ENCODE measurements at regions of chr9 and their contacts with region 1.

Region 1: DNA sequence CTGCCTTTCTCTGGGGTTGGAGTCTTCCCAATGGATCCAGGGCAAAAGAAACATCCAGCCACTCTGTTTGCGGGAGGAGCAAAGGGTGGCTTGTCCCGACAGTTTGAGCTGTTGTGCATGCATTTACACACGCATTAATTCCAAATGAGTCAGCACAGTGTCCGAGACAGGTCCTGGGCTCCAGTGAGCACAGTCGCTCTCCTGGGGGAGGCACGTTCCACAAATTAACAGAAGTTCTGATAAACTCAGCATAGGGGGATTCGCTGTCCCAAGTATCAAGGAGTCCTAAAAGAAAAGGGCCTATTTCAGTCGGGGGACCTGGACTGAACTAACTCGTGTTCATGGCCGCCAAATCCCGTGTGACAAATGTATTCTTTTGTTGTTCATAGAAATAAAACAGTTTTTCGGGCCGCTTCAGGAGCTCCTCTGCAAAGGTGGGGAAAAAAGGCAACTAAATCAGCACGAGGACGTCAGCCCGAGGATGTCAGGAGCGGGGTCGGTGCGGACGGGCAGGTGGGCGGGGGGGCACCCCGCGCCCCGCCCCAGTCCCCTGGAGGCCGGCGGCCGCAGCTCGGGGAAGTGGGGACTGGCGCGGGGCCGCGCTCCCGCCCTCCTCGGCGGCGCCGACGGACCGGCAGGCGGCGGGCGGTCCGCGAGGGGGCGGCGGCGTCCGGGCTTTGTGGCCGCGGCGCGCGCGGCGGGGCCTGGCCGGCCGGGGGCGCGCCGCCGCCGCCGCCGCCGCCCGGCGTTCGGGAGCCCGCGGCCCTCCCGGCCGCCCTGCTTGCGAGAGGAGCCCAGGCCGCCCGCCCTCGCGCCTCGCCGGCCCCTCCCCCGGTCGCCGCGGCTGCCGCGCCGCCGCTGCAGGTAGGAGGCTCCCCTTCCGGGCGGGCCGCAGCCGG is at the start of gene MSANTD3:
- DNase-seq: peak; percentile 76
- ATAC-seq: peak; percentile 86
- H3K4me3 ChIP-seq: peak within 1 kb of the TSS; percentile 77 to 97 (median 92)
- H3K27ac ChIP-seq: peak within 1 kb of the TSS; percentile 96
- H3K4me1 ChIP-seq: peaks cover 49% of the 10 kb centered on the region
- H3K27me3 ChIP-seq: 0 out of 5 replicates have a peak, but pooled peaks cover 0 to 1% of the 10 kb centered on the region in 2 experiments
- CTCF ChIP-seq: peak; percentile 9; the same call in 1 of the 2 replicates
- EP300 ChIP-seq: no peak
- POLR2A ChIP-seq: peak; percentile 50 to 79
- RAD21 ChIP-seq: no peak
- total RNA-seq, gene MSANTD3: 19.2 and 19.8 TPM in 2 replicates

Region 2: DNA sequence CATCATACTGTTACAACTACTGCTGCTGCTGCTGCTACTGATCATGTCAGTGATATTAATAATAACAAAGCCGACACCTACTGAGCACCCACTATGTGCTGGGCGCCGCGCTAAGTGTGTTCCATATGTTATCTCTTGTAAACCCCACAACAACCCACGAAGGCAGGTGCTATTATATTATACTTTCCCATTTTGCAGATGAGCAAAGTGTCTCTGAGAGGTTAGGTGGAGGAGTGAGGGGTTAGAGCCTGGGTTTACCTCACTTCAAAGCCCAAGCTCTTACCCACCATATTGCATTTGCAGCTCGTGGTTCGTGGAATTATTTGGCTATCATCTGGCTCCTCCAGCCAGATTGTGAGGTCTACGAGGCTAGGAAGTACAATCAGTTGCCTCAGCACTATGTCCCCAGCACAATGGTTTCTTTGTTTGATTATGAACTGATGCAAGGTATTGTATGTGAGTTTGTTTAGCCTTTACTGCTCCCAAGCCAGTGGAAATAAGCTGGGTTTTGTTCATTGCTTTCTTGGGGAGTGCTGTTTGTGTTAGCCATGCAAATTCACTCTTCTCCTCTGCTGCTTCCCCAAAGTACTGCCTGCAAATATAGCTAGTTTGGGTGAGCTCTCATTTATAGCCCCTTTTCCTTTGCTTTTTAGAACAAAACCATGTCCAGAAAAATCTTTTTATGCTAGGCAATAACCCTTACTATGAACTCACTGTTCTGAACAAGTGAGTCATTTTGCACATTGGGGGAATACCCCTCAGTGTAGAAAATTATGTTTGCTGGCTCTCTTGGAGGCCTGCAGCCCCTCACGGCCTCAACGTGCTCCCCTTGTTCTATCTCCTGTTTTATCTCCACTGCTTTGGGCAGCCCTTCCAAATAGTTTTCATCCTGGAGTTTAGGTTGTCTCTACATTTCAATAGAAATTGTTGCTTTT is 1252.9 kb before region 1 on chr9:
- CTCF ChIA-PET with region 1: no interaction called
- POLR2A ChIA-PET with region 1: no interaction called
- in situ Hi-C with region 1: no loop called
- intact Hi-C with region 1: loop called (anchors 5 kb)
- DNase-seq: peak; percentile 87
- ATAC-seq: peak; percentile 76
- H3K4me3 ChIP-seq: peak overlapping the region in 2 of 3 experiments; percentile 9 to 24; a peak in 2 of 6 replicates
- H3K27ac ChIP-seq: peak overlapping the region; percentile 22
- H3K4me1 ChIP-seq: peaks cover 85% of the 10 kb centered on the region
- H3K27me3 ChIP-seq: peaks cover 2 to 6% of the 10 kb centered on the region in 2 experiments; a peak in 2 of 5 replicates
- CTCF ChIP-seq: no peak
- EP300 ChIP-seq: 0 out of 4 replicates have a peak, but pooled peaks of 1 of the 2 experiments have one; percentile 31
- POLR2A ChIP-seq: no peak
- RAD21 ChIP-seq: no peak

Region 3: GRCh38 chr9:100352727-100353505 is 73.9 kb before region 1 on chr9 and contains the start of gene TEX10:
- CTCF ChIA-PET with region 1: no interaction called
- POLR2A ChIA-PET with region 1: interaction called, 9 read pairs
- in situ Hi-C with region 1: loop called (anchors 5 kb)
- intact Hi-C with region 1: loop called (anchors 5 kb)
- DNase-seq: peak; percentile 75
- ATAC-seq: peak; percentile 91
- H3K4me3 ChIP-seq: peak within 1 kb of the TSS; percentile 86 to 94 (median 88)
- H3K27ac ChIP-seq: peak within 1 kb of the TSS; percentile 85
- H3K4me1 ChIP-seq: peaks cover 57% of the 10 kb centered on the region
- H3K27me3 ChIP-seq: no peaks in the 10 kb centered on the region; a peak in 1 of 5 replicates
- CTCF ChIP-seq: 0 out of 2 replicates have a peak, but pooled peaks have one; percentile 25
- EP300 ChIP-seq: no peak
- POLR2A ChIP-seq: peak; percentile 80 to 94
- RAD21 ChIP-seq: no peak
- total RNA-seq, gene TEX10: 38.7 and 50.2 TPM in 2 replicates

Region 4: DNA sequence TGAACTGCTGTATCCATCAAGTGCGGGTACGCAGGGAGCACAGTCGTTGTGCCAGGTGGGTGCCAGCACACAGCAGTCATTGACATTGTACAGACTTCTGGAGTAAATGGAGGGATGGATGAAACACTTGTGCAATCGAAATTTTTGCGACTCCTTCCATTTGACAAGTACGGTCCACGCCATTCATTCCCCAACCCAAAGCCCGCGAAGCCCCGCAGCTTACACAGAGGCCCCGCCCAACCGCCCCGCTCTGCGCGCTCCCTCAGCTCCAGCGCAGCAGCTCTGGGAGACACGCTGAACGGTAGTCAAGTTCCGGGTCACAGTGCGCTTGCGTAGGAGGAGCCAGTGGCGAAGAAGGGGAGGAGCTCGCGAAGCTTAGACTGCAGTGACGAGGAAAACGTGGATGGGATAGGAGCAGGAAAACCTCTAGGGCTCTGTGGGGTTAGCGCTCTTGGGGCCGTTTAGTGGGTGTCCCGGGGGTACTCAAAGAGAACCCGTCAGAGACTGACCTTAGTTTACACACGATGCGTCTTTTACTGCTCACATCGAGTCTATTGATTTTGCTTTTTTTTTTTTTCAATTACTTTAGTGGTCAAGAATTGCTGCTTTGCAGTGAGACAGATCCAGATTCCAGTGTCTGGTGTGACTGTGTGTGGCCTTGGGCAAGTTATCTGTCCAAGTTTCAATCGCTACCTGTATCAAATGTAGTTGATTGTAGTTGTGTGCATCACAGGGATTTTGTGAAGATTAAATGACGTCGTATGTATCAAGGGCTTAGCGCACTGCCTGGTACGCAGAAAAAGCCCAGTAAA is 15.1 kb before region 1 on chr9:
- CTCF ChIA-PET with region 1: no interaction called
- POLR2A ChIA-PET with region 1: interaction called, 35 read pairs
- in situ Hi-C with region 1: no loop called
- intact Hi-C with region 1: no loop called
- DNase-seq: peak; percentile 89
- ATAC-seq: peak; percentile 99
- H3K4me3 ChIP-seq: peak overlapping the region; percentile 43 to 70 (median 48)
- H3K27ac ChIP-seq: peak overlapping the region; percentile 41
- H3K4me1 ChIP-seq: peaks cover 14% of the 10 kb centered on the region
- H3K27me3 ChIP-seq: no peaks in the 10 kb centered on the region; a peak in 1 of 5 replicates
- CTCF ChIP-seq: no peak
- EP300 ChIP-seq: no peak
- POLR2A ChIP-seq: peak; percentile 56 to 82
- RAD21 ChIP-seq: no peak

Region 5: GRCh38 chr9:100466171-100466827 is 39.5 kb after region 1 on chr9:
- CTCF ChIA-PET with region 1: no interaction called
- POLR2A ChIA-PET with region 1: no interaction called
- in situ Hi-C with region 1: no loop called
- intact Hi-C with region 1: loop called (anchors 2 kb)
- DNase-seq: peak; percentile 21
- ATAC-seq: peak; percentile 83
- H3K4me3 ChIP-seq: no peak overlapping the region
- H3K27ac ChIP-seq: peak overlapping the region; percentile 59
- H3K4me1 ChIP-seq: peaks cover 38% of the 10 kb centered on the region
- H3K27me3 ChIP-seq: no peaks in the 10 kb centered on the region
- CTCF ChIP-seq: no peak
- EP300 ChIP-seq: no peak
- POLR2A ChIP-seq: no peak
- RAD21 ChIP-seq: no peak

Measured in HepG2 (cell line).